Right ventricle myocardium inferior (tissue), 1 donor: ENCODE measurements at regions of chr12 and their contacts with region 1.

Region 1: DNA sequence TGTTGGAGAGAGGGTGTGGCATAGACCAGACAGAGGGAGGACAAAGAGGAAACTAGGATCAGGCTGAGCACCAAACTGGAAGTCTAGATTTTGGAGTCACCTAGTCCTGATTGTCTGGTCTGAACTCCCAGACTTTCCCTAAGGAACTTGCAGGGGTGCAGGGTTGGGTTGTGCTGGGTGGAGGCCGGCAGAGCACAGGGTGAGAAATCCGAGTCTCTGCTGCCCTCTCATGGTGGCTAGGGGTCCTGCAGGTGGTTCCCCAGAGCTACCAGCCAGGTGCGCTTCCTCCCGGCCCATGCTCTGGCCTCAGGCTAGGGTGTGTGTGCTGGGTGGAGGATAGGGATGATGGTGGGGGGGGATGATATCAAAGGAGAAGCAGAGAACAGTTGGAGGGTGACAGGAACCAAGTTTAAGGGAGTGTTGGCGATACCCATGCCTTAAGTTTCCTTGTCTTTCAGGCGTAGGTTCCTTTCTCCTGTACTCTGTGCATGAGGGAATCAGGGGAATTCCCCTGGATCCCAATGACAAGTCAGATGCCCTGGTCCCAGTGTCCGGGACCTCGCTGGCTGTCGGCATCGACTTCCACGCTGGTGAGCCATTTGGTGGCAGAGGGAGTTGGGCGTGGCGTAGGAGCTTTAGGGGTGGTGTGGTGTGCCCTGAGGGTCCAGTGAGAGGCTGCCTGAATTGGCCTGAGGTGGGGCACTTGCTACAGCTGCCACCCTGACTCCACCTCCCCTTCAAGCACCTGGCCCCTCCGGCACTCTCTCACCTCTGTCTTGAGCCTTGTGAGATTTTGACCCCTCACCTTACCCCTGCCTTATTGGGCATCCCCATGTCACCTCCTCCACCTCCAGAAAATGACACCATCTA is 33.4 kb upstream of the NXPH4 start:
- DNase-seq: peak; percentile 84
- ATAC-seq: peak; percentile 80

Region 2: DNA sequence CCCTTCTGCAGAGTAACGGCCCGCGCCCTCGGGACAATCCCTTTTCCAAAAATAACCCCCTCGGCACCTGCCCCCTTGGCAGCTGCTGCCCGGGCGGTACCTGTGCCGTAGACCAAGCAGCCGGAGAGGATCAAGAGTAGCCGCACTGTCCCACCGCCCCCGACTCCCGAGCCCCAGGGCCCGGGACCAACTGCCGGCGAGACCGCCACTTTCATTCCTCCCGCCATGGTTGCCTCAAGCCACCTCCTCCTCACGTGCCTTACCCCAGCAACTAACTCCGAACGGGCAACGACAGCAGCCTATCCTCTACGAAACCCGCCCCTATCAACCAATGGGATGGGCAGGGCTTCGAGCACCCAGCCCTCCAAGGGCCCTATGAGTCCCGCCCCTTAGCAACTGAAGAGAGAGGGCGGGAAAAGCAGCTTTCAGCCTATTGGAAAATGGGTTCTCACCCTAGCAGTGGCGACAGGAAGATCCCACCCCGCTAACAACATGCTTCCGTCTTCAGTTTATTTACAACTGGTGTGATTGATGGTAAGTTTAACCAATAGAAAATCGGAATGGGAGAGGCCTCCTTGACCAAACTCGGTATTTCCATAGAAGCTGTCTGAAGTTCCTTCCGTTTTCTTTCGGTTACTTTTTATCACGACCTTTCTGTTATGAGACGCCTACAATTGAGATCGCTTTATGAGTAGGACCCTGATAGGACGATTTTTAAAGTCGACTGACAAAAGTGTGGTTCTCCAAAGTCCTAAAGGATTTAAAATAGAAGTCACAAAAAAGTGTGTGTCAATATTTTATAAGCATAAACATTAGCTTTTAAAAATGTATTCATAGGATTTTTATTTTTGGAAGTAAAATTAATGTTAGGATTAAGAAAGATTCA is 104.4 kb before region 1 on chr12 and contains the start of gene NEMP1:
- intact Hi-C with region 1: loop called (anchors 2 kb)
- DNase-seq: peak; percentile 96
- ATAC-seq: peak; percentile 100
- total RNA-seq, gene NEMP1: 3.3 TPM